IMR-90 (cell line): ENCODE measurements at regions of chr11 and their contacts with region 1.

Region 1: GRCh38 chr11:69153661-69154060 is 2.1 kb upstream of the SMIM38 start:
- DNase-seq: peak; percentile 63
- ATAC-seq: no peak
- H3K4me3 ChIP-seq: no peak overlapping the region
- H3K27ac ChIP-seq: no peak overlapping the region
- H3K4me1 ChIP-seq: peaks cover 20% of the 10 kb centered on the region
- H3K27me3 ChIP-seq: no peaks in the 10 kb centered on the region
- CTCF ChIP-seq: no peak
- POLR2A ChIP-seq: no peak
- RAD21 ChIP-seq: no peak

Region 2: DNA sequence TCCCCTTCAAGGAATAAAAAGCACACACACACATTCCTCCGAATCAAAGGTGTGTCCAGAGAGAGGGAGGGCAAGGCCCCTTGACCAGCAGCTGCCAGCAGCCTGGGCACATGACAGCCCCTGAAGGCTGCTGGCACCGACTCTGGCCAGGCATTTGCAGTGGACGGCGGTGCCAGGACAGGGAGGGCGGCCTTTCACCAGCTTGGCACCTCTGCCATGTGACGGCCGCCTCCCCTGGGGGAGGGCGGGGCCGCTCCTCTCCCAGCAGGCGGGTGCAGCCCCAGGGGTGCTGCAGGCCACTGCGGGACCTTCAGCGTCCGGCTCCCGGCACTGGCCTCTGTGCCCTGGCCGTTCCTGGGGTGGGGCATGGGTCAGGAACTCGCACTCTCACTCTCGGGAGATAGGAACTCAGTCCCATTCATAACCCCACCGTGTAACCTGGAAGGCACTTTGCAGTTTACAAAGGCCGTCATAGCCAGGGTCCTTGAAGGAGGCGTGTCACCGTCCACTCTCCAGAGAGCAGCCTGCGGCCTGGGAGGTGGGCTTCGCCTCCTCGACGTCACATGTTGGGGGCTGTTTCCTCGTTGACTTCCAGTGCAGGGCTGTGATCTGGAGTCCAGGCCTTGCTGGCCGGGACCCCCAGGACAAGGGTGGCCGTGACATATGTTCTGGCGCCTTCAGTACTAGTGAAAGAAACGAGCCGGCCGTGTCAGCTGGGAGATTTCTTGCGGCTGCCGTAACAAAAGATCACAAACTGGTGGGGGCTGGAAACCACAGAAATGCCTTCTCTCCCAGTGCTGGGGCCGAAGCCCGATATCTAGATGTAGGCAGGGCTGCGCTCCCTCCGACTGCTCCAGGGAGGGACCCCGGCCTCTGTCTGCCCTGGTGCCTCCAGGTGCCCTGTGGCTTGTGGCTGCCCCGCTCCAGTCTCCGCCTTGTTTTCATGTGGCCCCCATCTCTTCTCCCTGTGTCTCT is 37.8 kb before region 1 on chr11:
- CTCF ChIA-PET with region 1: no interaction called
- POLR2A ChIA-PET with region 1: interaction called, 12 read pairs
- dilution Hi-C with region 1: no loop called
- in situ Hi-C with region 1: no loop called
- intact Hi-C with region 1: no loop called
- DNase-seq: no peak
- ATAC-seq: peak; percentile 22; the same call in 1 of the 2 replicates
- H3K4me3 ChIP-seq: no peak overlapping the region
- H3K27ac ChIP-seq: no peak overlapping the region
- H3K4me1 ChIP-seq: peaks cover 4% of the 10 kb centered on the region; the same call in 1 of the 2 replicates
- H3K27me3 ChIP-seq: peaks cover 12% of the 10 kb centered on the region; the same call in 1 of the 2 replicates
- CTCF ChIP-seq: no peak
- POLR2A ChIP-seq: no peak
- RAD21 ChIP-seq: no peak

Region 3: DNA sequence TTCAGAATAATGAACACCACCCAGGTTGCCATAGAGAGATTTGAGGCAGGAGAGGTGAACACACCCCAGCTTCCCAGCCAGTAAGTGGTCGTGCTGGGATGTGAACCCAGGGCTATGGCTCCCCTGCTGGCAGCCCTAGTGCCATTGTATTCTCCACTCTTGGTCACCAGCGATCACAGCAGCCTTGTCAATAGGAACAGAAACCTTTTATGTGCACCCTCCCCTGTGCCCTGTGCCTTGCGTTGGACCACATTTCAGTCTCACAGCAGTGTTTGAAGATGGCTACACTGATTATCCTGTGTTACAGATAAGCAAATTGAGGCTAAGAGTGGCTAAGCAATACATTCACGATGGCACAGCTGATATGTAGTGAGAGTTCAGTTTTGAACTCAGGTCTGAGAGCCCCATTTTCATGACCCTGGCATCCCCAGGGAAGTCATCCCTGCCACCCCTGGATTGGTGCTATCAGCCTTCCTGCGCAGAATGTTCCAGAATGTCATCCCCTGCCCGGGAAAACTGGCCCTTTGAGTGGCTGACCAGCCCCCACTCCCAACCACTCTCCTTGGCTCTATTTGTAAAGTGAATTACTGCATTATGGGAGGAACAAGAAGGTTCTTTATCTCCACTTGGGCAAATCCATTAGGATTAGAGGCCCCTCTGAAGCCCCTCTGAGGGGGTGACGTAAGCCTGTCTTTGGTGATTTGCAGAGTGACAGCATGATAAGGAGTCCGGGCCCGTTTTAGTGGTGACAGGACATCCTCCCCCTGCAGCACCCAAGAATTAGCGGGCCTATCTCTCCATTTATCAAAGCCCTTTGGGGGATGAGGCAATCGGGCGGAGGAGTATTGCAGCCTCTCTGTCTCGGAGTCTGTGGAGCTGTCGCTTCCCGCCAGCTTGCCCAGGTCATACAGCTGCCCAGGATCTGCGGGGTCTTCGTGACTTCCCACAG is 32.9 kb after region 1 on chr11:
- CTCF ChIA-PET with region 1: no interaction called
- POLR2A ChIA-PET with region 1: no interaction called
- dilution Hi-C with region 1: no loop called
- in situ Hi-C with region 1: no loop called
- intact Hi-C with region 1: no loop called
- DNase-seq: no peak
- ATAC-seq: no peak
- H3K4me3 ChIP-seq: no peak overlapping the region
- H3K27ac ChIP-seq: no peak overlapping the region
- H3K4me1 ChIP-seq: no peaks in the 10 kb centered on the region
- H3K27me3 ChIP-seq: peaks cover 28% of the 10 kb centered on the region
- CTCF ChIP-seq: no peak
- POLR2A ChIP-seq: no peak
- RAD21 ChIP-seq: no peak

Region 4: GRCh38 chr11:69200331-69201065 is 46.8 kb after region 1 on chr11:
- CTCF ChIA-PET with region 1: no interaction called
- POLR2A ChIA-PET with region 1: interaction called, 20 read pairs
- dilution Hi-C with region 1: no loop called
- in situ Hi-C with region 1: no loop called
- intact Hi-C with region 1: no loop called
- DNase-seq: no peak
- ATAC-seq: no peak
- H3K4me3 ChIP-seq: no peak overlapping the region
- H3K27ac ChIP-seq: no peak overlapping the region
- H3K4me1 ChIP-seq: no peaks in the 10 kb centered on the region; the same call in 1 of the 2 replicates
- H3K27me3 ChIP-seq: peaks cover 36% of the 10 kb centered on the region
- CTCF ChIP-seq: no peak
- POLR2A ChIP-seq: no peak
- RAD21 ChIP-seq: no peak